ENCODE measurements at regions of chr9 and their contacts with region 1.

Region 1: GRCh38 chr9:70258692-70259511 is at the start of gene SMC5:
- DNase-seq: peak; percentile 93 to 96
- ATAC-seq: peak; percentile 98
- H3K4me3 ChIP-seq: peak within 1 kb of the TSS; percentile 94 to 95
- H3K27ac ChIP-seq: peak within 1 kb of the TSS; percentile 64 to 87
- H3K4me1 ChIP-seq: peaks cover 8 to 15% of the 10 kb centered on the region in 2 donors
- H3K27me3 ChIP-seq: no peaks in the 10 kb centered on the region
- total RNA-seq, gene SMC5: 36.4 to 37.0 TPM

Region 2: DNA sequence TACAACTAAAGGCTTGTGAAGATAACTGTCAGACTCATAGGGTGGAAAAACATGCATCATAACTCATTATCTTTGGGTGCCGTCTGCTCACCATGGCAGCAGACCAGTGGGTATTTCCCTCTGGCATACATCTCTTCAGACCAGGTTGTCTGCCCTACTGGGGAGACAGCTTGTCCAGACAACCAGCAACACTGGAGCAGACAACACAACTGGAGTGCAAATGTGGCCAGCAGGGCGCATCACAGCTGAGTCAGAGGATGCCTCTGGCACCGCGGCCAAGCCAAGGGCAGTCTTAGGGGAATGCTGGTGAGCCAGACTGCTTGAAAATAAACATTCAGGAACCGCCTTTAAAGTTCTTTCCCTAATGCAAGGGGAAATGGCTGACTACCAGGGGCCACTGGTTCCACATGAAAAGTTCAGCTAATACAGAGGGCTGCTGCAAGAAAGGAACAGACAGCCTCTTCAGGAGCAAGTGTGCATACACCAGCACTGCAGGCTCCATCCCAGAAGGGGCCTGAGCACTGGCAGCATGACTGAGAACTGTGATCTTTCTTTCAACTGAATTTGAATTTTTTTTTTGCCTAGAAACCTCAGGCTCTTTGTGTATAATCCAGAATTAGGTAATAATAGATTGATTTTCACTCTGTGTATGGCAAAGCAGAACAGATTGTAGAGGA is 137.9 kb before region 1 on chr9:
- intact Hi-C with region 1: loop called in 1 of 2 experiments (anchors 10 kb)
- DNase-seq: peak; percentile 86 to 90
- ATAC-seq: peak; percentile 79
- H3K4me3 ChIP-seq: no peak overlapping the region
- H3K27ac ChIP-seq: no peak overlapping the region
- H3K4me1 ChIP-seq: peaks cover 0 to 2% of the 10 kb centered on the region in 2 donors
- H3K27me3 ChIP-seq: no peaks in the 10 kb centered on the region

Region 3: DNA sequence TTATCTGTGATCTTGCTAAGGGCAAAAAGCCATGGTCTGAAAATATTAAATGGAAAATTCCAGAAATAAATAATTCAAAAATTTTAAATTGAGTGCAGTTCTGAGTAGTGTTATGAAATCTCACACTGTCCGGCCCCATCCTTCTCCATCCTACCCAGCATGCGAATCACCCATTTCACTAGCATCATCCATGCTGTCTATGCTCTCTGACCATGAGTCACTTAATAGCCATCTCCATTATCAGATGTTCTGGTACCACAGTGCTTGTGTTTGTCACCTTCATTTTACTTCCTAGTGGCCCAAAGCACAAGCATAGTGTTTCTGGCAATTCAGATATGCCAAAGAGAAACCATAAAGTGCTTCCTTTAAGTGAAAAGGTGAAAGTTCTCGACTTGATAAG is 63.4 kb before region 1 on chr9:
- intact Hi-C with region 1: no loop called
- DNase-seq: no peak
- ATAC-seq: no peak
- H3K4me3 ChIP-seq: no peak overlapping the region
- H3K27ac ChIP-seq: no peak overlapping the region
- H3K4me1 ChIP-seq: no peaks in the 10 kb centered on the region
- H3K27me3 ChIP-seq: no peaks in the 10 kb centered on the region

Measured in aorta (tissue), 5 donors.